ENCODE measurements at regions of chr10 and their contacts with region 1.

Region 1: DNA sequence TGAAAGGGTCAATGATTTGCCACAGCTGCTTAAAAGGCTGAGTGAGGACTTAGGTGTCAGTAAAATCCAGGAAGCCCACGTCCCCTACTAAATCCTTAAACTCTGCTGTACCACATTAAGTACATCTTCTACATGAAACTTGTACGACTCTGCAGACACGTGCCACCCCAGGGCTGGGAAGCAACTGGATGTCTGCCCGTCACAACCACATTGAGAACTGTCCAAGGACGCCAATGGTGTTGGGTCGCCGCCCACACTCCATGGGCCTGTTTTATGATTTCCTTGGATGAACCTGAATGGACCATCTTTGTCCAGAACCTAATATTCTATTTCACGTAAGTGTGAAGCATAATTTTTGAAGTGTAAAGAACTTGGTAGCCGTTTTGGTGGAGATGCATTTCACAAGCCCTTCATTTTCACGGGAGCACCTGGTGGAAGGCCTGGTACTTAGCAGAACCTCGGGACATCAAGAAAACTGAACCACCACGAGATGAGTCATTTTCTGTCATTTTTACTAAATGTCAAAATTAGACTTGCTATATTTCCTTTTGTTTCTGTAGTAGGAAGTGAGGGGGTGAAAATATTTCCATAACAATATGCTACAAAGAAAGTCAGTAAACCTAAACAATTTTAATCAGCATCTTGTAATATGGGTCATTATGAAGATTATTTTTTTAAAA is 134.9 kb downstream of the SFMBT2 start:
- DNase-seq: peak in 1 of 3 donors; percentile 18
- H3K4me3 ChIP-seq: no peak overlapping the region
- H3K4me3 Mint-ChIP-seq: no peak overlapping the region
- H3K27ac ChIP-seq: no peak overlapping the region
- H3K27ac Mint-ChIP-seq: peak overlapping the region in 5 of 7 donors; percentile 16 to 61 (median 54)
- H3K4me1 ChIP-seq: peaks cover 0 to 10% of the 10 kb centered on the region in 2 donors
- H3K4me1 Mint-ChIP-seq: peaks cover 13% of the 10 kb centered on the region
- H3K27me3 ChIP-seq: no peaks in the 10 kb centered on the region
- H3K27me3 Mint-ChIP-seq: peaks cover 0 to 2% (median 0%) of the 10 kb centered on the region in 3 donors
- CTCF ChIP-seq: no peak

Region 2: GRCh38 chr10:7133278-7133677 is 142.6 kb before region 1 on chr10:
- intact Hi-C with region 1: no loop called
- DNase-seq: no peak
- H3K4me3 ChIP-seq: no peak overlapping the region
- H3K4me3 Mint-ChIP-seq: no peak overlapping the region
- H3K27ac ChIP-seq: no peak overlapping the region
- H3K27ac Mint-ChIP-seq: no peak overlapping the region
- H3K4me1 ChIP-seq: no peaks in the 10 kb centered on the region
- H3K4me1 Mint-ChIP-seq: peaks cover 2% of the 10 kb centered on the region
- H3K27me3 ChIP-seq: no peaks in the 10 kb centered on the region
- H3K27me3 Mint-ChIP-seq: peaks cover 0 to 1% (median 0%) of the 10 kb centered on the region in 3 donors
- CTCF ChIP-seq: no peak

Region 3: DNA sequence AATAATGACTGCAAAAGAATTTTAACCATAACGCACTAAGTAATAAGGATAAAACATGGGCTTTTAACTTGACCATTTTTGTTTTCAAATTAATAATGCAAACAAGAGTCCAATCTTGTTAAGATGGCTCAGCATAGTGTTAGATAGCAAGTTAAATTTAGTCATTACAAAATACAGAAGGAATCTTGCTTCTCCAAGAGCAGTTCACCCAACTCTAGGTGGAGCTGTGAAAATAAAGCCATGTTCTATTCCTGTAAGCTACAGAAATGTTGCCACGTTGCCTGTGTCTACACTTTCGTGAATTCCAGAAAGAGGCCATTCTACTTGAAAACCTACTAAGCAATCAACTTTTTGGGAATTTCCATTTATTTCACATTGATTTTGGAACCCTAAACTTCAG is 56.9 kb before region 1 on chr10:
- intact Hi-C with region 1: no loop called
- DNase-seq: no peak
- H3K4me3 ChIP-seq: no peak overlapping the region
- H3K4me3 Mint-ChIP-seq: no peak overlapping the region
- H3K27ac ChIP-seq: no peak overlapping the region
- H3K27ac Mint-ChIP-seq: no peak overlapping the region
- H3K4me1 ChIP-seq: no peaks in the 10 kb centered on the region
- H3K4me1 Mint-ChIP-seq: peaks cover 4% of the 10 kb centered on the region
- H3K27me3 ChIP-seq: no peaks in the 10 kb centered on the region
- H3K27me3 Mint-ChIP-seq: peaks cover 0 to 3% (median 0%) of the 10 kb centered on the region in 3 donors
- CTCF ChIP-seq: no peak

Region 4: DNA sequence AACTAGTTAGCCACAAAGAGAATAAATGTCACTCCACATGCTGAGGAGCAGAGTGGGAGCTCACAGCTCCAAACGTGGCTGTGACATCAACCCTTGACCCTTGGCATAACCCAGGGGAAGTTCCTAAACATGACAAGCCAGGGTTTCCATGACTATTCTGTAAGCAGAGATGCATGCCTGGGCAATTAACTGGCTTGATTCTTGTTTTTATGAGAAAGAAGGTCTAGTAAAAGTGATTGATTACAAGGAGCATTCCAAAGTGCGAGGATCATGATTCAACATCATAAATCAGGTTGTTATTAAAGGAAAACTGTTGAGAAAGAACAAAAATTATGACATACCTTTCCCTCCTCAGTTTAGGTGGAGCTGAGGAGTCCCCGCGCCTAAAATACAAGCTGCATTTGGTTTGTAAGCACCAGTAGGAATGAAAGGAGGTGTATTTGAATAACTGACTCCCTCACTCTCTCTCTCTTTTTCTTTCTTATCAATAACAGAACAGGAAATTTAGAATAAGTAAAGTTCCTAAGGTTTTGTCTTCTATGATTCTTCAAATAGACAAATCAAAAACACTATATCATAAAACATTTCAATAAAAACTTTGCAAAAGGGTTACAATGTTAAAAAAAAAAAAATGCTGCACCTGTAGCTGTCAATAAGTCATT is 26.6 kb after region 1 on chr10:
- intact Hi-C with region 1: loop called in 1 of 2 experiments (anchors 1 kb)
- DNase-seq: peak in 1 of 3 donors; percentile 30
- H3K4me3 ChIP-seq: no peak overlapping the region
- H3K4me3 Mint-ChIP-seq: no peak overlapping the region
- H3K27ac ChIP-seq: no peak overlapping the region
- H3K27ac Mint-ChIP-seq: peak overlapping the region in 1 of 7 donors; percentile 15
- H3K4me1 ChIP-seq: no peaks in the 10 kb centered on the region
- H3K4me1 Mint-ChIP-seq: peaks cover 15% of the 10 kb centered on the region
- H3K27me3 ChIP-seq: no peaks in the 10 kb centered on the region
- H3K27me3 Mint-ChIP-seq: peaks cover 0 to 3% (median 0%) of the 10 kb centered on the region in 3 donors
- CTCF ChIP-seq: no peak

Measured in CD14-positive monocyte (primary cell).